Activated T-helper 2 cell treated with anti-CD3 and anti-CD28 coated beads, Interferon-gamma antibody, Interleukin-2, Interleukin-4, amounts not matched to agents 10 μg/mL and 5 μg/mL and 100 μg/mL, durations not matched to agents 14 hours and 24 hours and 36 hours (primary cell): ENCODE measurements at regions of chr4 and their contacts with region 1.

Region 1: DNA sequence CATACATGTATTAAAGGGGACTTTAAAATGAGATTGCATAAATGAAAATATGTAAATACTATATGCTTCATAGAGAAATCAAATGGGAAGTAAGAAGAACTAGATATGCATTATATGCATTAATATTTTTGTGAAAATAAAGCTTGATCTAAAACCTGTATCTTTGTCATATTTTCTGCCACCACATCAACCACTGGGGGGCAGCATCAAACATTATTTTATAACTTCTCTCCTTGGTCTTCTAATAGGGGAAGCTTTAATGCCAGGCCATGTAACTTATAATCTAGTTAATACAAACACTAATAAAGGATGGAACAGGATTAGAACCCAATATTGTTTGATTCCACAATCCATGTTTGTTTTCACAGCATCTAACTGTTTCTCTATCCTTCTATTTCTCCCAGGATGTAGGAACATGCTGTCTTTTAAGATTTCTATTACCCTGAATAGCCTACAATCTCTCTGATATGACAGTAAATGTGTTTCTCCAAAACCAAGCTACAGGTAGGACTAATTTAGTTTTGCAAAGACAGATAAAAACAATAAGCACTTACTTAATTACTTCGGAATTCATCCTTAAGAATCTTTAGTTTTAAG is 10.0 kb downstream of the QRFPR start:
- DNase-seq: no peak
- H3K4me3 Mint-ChIP-seq: no peak overlapping the region
- H3K27ac Mint-ChIP-seq: no peak overlapping the region
- H3K4me1 Mint-ChIP-seq: no peaks in the 10 kb centered on the region
- H3K27me3 Mint-ChIP-seq: peaks cover 24% of the 10 kb centered on the region

Region 2: DNA sequence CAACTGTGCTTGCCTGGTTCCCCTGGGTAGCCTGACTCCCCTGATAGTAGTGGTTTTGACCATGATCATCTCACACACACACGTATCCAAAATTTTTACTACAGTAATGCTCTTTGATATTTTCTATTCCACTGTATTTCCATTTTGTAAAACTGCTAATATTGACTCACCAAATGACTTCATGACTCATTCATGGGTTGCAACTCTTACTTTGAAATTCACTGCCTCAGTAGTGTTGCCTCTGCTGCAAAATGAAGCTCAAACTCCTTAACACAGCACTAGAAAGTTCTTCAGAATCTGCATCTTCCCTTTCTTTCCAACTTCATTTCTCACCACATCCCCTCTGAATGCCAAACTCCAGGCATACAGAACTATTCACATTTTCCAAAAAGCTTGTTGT is 10.3 kb before region 1 on chr4:
- intact Hi-C with region 1: loop called (anchors 1 kb)
- DNase-seq: no peak
- H3K4me3 Mint-ChIP-seq: no peak overlapping the region
- H3K27ac Mint-ChIP-seq: no peak overlapping the region
- H3K4me1 Mint-ChIP-seq: peaks cover 3% of the 10 kb centered on the region
- H3K27me3 Mint-ChIP-seq: peaks cover 11% of the 10 kb centered on the region

Region 3: DNA sequence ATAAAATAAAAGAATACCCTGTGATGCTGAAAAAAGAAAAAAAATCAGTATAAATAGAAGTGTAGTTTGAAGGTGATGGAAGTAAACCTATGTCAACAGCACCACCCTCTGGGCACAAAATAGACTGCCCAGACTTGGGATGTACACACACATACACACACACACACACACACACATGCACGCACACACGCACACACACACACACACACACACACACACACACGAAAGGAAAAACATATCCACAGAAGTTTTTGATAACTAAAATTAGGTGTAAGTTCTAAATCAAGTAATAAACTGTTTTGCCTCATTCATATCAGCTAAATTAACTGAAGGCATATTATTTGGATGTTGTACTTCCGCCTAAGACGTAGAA is 285.4 kb after region 1 on chr4:
- intact Hi-C with region 1: loop called (anchors 10 kb)
- DNase-seq: no peak
- H3K4me3 Mint-ChIP-seq: no peak overlapping the region
- H3K27ac Mint-ChIP-seq: no peak overlapping the region
- H3K4me1 Mint-ChIP-seq: peaks cover 7% of the 10 kb centered on the region
- H3K27me3 Mint-ChIP-seq: peaks cover 28% of the 10 kb centered on the region

Region 4: GRCh38 chr4:121726642-121727268 is 355.9 kb after region 1 on chr4:
- intact Hi-C with region 1: loop called (anchors 5 kb)
- DNase-seq: no peak
- H3K4me3 Mint-ChIP-seq: no peak overlapping the region
- H3K27ac Mint-ChIP-seq: no peak overlapping the region
- H3K4me1 Mint-ChIP-seq: peaks cover 9% of the 10 kb centered on the region
- H3K27me3 Mint-ChIP-seq: peaks cover 6% of the 10 kb centered on the region

Region 5: DNA sequence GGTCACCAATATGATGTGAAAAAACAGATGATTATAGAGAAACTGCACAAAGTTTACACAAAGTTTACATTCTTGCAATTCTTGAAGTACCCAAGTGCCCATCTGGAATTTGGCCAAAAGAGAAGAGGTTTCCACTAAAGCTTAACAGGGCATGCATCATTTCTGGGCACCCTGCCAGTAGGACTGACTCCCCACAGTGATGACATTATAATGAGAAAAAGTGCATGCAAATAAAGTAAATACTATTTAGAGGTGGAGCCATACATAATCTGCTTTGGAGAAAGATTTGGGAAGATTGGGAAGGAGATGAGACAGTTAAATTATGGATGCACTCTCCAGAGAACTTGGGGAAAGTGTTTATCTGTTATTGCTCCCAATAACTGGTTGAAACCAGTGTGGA is 674.7 kb after region 1 on chr4:
- intact Hi-C with region 1: loop called (anchors 10 kb)
- DNase-seq: no peak
- H3K4me3 Mint-ChIP-seq: no peak overlapping the region
- H3K27ac Mint-ChIP-seq: no peak overlapping the region
- H3K4me1 Mint-ChIP-seq: no peaks in the 10 kb centered on the region
- H3K27me3 Mint-ChIP-seq: peaks cover 7% of the 10 kb centered on the region